ENCODE measurements at regions of chr4 and their contacts with region 1.

Region 1: GRCh38 chr4:118974758-118975157 is 86.1 kb downstream of the SYNPO2 start:
- DNase-seq: peak; percentile 63
- ATAC-seq: peak; percentile 66; the same call in 1 of the 2 replicates
- H3K4me3 ChIP-seq: no peak overlapping the region
- H3K27ac ChIP-seq: no peak overlapping the region
- H3K4me1 ChIP-seq: no peaks in the 10 kb centered on the region; the same call in 1 of the 2 replicates
- H3K27me3 ChIP-seq: no peaks in the 10 kb centered on the region
- CTCF ChIP-seq: no peak
- POLR2A ChIP-seq: no peak
- RAD21 ChIP-seq: no peak

Region 2: DNA sequence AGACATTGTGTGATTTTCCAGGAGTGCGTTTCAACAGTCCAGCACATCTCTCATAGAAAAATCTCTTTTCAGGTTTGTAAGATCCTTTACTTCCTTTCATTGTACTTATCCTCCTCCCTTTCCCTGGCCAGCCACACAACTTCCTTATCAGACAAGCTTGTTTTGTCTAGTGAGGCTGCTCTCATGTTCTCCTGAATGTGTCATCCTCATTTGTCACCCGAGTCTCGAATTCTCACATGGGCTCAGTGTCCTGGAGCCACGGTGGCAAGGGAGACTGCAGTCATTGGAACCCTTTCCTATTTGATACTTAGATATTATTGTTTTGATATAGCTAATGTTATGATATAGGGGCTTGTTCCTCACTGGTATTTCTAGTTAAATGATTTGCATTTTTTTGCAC is 69.2 kb before region 1 on chr4:
- CTCF ChIA-PET with region 1: no interaction called
- POLR2A ChIA-PET with region 1: no interaction called
- dilution Hi-C with region 1: no loop called
- in situ Hi-C with region 1: no loop called
- intact Hi-C with region 1: no loop called
- DNase-seq: peak; percentile 57
- ATAC-seq: peak; percentile 35
- H3K4me3 ChIP-seq: no peak overlapping the region
- H3K27ac ChIP-seq: no peak overlapping the region
- H3K4me1 ChIP-seq: peaks cover 2% of the 10 kb centered on the region
- H3K27me3 ChIP-seq: no peaks in the 10 kb centered on the region
- CTCF ChIP-seq: no peak
- POLR2A ChIP-seq: no peak
- RAD21 ChIP-seq: no peak

Region 3: DNA sequence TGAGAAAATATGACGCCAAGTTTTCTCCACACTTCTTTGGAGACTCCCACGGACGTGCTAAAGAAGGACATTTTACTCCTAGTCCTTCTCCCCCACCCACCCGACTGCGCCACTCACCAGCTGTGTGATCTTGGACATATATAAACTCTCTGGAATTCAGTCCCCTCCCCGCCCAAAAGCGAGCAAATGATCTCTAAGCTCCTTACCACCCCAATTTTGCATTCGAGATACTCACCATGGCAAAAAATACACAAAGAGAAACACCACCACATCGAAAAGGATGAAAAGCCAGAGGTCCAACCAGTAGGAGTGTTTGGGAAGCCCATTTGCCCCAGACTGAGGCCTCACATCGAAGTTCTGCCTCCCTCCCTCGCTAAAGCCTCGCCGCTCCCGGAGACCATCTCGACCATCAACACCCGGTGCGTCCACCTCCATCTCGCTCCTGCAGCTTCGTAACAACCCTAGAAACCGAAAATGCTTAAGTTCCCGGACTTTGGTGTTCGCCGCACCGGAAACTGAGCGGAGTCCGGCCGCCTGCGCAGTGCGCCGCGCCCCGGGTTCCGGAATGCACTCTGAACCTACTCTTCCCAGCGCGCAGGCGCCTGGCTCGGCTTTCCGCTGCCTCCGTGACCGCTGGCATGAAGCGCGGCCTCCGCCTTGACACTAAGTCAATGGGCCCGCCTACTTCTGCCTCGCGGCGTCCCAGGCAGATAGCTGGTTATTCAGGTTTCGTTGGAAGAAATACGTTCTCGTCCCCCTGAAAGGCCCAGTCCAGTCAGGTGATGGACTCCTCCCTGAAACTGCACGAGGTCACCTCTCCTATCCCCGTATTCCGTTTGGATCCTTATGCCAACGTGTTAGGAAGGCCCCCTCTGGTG is 325.6 kb after region 1 on chr4:
- CTCF ChIA-PET with region 1: no interaction called
- POLR2A ChIA-PET with region 1: no interaction called
- dilution Hi-C with region 1: loop called (anchors 10 kb)
- in situ Hi-C with region 1: no loop called
- intact Hi-C with region 1: no loop called
- DNase-seq: peak; percentile 89
- ATAC-seq: peak; percentile 94
- H3K4me3 ChIP-seq: peak overlapping the region; percentile 70
- H3K27ac ChIP-seq: peak overlapping the region; percentile 90
- H3K4me1 ChIP-seq: no peaks in the 10 kb centered on the region; the same call in 1 of the 2 replicates
- H3K27me3 ChIP-seq: no peaks in the 10 kb centered on the region
- CTCF ChIP-seq: no peak
- POLR2A ChIP-seq: peak; percentile 88
- RAD21 ChIP-seq: no peak

Region 4: DNA sequence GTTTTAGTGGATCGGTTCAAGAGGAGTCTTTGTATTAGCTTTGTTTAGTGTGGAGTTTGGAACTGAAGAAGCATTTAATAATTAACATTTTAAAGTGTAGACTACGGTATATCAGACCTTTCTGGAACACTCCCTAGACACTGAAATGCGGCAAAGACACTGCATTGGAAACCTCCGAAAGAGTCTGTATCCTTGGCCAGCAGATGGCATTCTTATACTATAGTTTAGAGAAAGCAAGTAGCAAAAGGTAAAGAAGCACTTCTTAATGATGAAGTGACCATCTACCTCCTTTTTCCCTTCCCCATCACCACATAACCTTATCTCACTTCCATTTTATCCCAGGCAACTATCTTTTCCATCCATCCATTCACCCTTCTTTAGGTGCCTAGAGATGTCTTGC is 339.6 kb after region 1 on chr4:
- CTCF ChIA-PET with region 1: no interaction called
- POLR2A ChIA-PET with region 1: no interaction called
- dilution Hi-C with region 1: no loop called
- in situ Hi-C with region 1: no loop called
- intact Hi-C with region 1: no loop called
- DNase-seq: peak; percentile 59
- ATAC-seq: peak; percentile 86
- H3K4me3 ChIP-seq: no peak overlapping the region
- H3K27ac ChIP-seq: no peak overlapping the region
- H3K4me1 ChIP-seq: no peaks in the 10 kb centered on the region
- H3K27me3 ChIP-seq: no peaks in the 10 kb centered on the region
- CTCF ChIP-seq: peak; percentile 63
- POLR2A ChIP-seq: no peak
- RAD21 ChIP-seq: peak; percentile 72